GM10248 (cell line): ENCODE measurements at regions of chr3 and their contacts with region 1.

Region 1: GRCh38 chr3:114231616-114232015 is 5.8 kb downstream of the ZNF80 start:
- DNase-seq: no peak
- CTCF ChIP-seq: no peak

Region 2: DNA sequence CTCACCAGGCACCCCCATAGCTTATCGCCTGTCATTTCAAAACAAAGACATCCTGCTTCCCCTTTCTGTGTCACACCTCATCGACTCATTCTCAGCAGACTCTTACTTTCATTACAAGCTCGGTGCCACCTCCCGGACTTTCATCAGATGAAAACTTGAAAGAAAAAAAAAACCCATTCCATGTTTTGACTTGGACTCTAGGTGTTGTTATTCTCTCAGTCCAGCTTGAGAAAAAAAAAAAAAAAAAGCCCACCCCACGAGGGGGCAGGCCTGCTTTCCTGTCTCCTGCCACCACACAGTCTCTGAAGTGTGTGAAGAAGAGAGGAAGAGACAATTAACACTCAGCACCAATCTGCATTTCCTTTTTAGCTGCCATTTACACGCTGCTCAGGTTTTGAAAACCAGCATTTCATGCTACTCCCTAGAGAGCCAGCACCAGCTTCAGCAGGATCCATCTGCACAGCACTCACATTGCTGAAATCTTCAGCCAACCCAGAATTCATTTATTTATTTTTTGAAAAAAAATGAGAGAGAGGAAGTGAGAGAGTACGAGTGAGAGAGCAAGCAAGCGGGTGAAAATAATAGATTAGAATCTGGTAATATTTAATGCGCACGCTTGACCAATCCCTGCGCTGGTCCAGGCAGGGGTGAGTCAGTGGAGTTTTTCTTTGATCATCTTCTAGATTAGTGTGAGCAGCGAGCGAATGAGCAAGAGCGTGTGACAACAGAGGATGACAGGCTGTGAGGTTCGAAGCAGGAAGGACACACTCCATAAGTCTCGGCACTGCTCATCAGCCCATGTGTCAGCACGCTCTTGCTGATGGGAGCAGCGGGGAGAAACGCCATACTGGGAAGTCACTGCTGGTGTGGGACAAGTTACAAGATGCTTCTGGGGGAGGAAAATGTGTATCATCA is 17.7 kb before region 1 on chr3:
- CTCF ChIA-PET with region 1: interaction called, 7 read pairs
- POLR2A ChIA-PET with region 1: interaction called, 11 read pairs
- DNase-seq: peak; percentile 73
- CTCF ChIP-seq: no peak